ENCODE measurements at regions of chr2 and their contacts with region 1.

Region 1: GRCh38 chr2:189393440-189394111 is 47.7 kb upstream of the WDR75 start:
- DNase-seq: peak; percentile 94
- ATAC-seq: peak; percentile 97
- H3K4me3 ChIP-seq: peak overlapping the region; percentile 43; the same call in 1 of the 2 replicates
- H3K27ac ChIP-seq: peak overlapping the region; percentile 73
- H3K4me1 ChIP-seq: peaks cover 22% of the 10 kb centered on the region
- H3K27me3 ChIP-seq: no peaks in the 10 kb centered on the region
- CTCF ChIP-seq: no peak

Region 2: GRCh38 chr2:189370719-189371118 is 22.9 kb before region 1 on chr2:
- CTCF ChIA-PET with region 1: no interaction called
- POLR2A ChIA-PET with region 1: no interaction called
- intact Hi-C with region 1: loop called (anchors 2 kb)
- DNase-seq: peak; percentile 43
- ATAC-seq: no peak
- H3K4me3 ChIP-seq: no peak overlapping the region
- H3K27ac ChIP-seq: peak overlapping the region; percentile 85
- H3K4me1 ChIP-seq: peaks cover 41% of the 10 kb centered on the region
- H3K27me3 ChIP-seq: no peaks in the 10 kb centered on the region
- CTCF ChIP-seq: no peak